ENCODE measurements at regions of chr2 and their contacts with region 1.

Region 1: GRCh38 chr2:240452457-240453256 is 17.2 kb downstream of the GPC1 start:
- DNase-seq: peak; percentile 58 to 97
- H3K4me3 ChIP-seq: peak overlapping the region; percentile 60; the same call in 1 of the 2 replicates
- H3K27ac ChIP-seq: no peak overlapping the region
- H3K4me1 ChIP-seq: peaks cover 44% of the 10 kb centered on the region
- H3K27me3 ChIP-seq: no peaks in the 10 kb centered on the region
- CTCF ChIP-seq: no peak

Region 2: DNA sequence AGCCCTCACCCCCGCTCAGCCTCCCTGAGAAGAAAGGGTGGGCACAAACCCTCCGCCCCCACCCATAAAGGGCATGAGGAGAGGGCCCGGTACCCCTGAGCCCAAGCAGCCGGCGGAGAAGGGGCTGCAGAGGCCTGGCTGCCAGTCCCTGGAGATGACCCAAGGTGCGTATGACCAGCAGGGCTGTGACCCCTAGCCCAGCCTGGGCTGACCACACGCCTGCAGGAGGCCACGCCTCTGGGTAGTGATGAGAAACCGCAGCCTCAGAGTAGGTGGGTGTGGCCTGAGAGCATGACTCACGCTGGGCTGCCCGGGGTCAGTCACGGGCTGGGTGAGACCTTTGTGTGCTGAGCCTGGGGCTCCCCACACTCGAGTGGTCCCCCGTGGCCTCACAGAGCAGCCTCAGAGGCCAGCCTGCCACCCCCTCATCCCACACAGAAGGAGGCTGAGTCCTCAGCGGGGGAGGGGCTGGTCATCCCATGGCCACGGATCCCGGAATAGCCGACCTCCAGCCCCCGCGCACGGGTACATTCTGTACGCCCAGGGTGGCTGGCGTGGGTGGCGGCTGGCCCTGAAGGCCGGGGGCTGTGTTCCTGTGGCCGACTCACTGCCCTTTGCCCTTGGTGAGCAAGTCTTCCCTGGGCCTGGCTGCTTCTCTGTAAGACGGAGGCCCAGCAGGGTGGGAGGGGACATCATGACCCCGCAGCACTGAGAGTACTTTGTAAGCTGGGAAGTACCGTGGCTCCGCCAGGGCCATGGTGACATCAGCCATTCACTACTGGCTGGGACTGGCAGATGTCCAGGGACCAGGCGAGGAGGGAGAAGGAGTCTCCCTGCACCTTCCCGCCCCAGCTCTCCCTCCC is 201.4 kb before region 1 on chr2:
- CTCF ChIA-PET with region 1: interaction called, 20 read pairs
- POLR2A ChIA-PET with region 1: no interaction called
- intact Hi-C with region 1: loop called (anchors 1 kb)
- DNase-seq: peak; percentile 92 to 98
- H3K4me3 ChIP-seq: peak overlapping the region; percentile 48; the same call in 1 of the 2 replicates
- H3K27ac ChIP-seq: peak overlapping the region; percentile 86
- H3K4me1 ChIP-seq: peaks cover 39% of the 10 kb centered on the region
- H3K27me3 ChIP-seq: no peaks in the 10 kb centered on the region
- CTCF ChIP-seq: no peak

Region 3: GRCh38 chr2:240473211-240473610 is 20.6 kb after region 1 on chr2:
- CTCF ChIA-PET with region 1: interaction called, 3 read pairs
- POLR2A ChIA-PET with region 1: interaction called, 20 read pairs
- intact Hi-C with region 1: no loop called
- DNase-seq: no peak
- H3K4me3 ChIP-seq: no peak overlapping the region
- H3K27ac ChIP-seq: no peak overlapping the region
- H3K4me1 ChIP-seq: no peaks in the 10 kb centered on the region
- H3K27me3 ChIP-seq: no peaks in the 10 kb centered on the region
- CTCF ChIP-seq: no peak

Region 4: DNA sequence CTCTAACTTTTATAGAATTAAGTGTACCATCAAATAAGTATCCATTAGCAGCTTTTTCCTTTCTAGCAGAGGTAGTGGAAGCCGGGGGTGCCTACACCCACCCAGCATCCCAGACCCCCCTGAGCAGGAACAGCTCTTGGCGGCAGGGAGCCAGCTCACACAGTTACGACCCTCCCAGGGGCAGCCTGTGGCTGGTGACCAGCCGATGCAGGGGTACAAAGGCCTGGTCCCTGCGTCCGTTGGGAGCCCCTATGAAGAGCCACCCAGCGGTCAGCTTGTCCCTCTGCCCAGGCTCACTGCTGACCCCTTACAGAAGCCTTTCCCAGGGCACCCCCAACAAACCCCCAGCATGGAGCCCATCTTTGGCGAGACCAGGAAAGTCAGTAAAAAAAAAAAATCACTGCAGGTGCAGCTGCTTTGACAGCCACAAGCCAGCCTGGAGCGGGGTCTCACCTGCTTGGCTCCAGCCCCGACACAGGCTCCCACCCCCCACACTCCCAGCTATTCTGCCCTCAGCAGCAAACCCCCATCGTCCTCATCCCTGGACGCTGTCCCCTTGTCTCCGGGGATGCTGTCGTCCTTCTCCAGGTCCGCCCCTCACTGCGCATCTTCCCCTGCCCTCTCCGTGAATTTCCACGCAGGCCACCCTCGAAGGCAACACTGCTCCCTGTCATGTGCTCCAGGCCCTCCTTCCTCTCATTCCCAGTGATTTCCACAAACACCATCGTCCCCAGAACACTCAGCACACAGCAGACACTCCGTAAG is 25.9 kb after region 1 on chr2:
- CTCF ChIA-PET with region 1: no interaction called
- POLR2A ChIA-PET with region 1: interaction called, 44 read pairs
- intact Hi-C with region 1: no loop called
- DNase-seq: no peak
- H3K4me3 ChIP-seq: no peak overlapping the region
- H3K27ac ChIP-seq: no peak overlapping the region
- H3K4me1 ChIP-seq: no peaks in the 10 kb centered on the region
- H3K27me3 ChIP-seq: no peaks in the 10 kb centered on the region
- CTCF ChIP-seq: no peak

Region 5: GRCh38 chr2:240571314-240571973 is 118.8 kb after region 1 on chr2:
- CTCF ChIA-PET with region 1: no interaction called
- POLR2A ChIA-PET with region 1: no interaction called
- intact Hi-C with region 1: no loop called
- DNase-seq: no peak
- H3K4me3 ChIP-seq: no peak overlapping the region
- H3K27ac ChIP-seq: no peak overlapping the region
- H3K4me1 ChIP-seq: peaks cover 27% of the 10 kb centered on the region
- H3K27me3 ChIP-seq: no peaks in the 10 kb centered on the region
- CTCF ChIP-seq: no peak

Measured in PC-9 (cell line).